ENCODE measurements at regions of chr15 and their contacts with region 1.

Region 1: GRCh38 chr15:99704444-99704838 is 28.8 kb downstream of the LYSMD4 start:
- DNase-seq: peak; percentile 83
- H3K4me3 ChIP-seq: no peak overlapping the region
- H3K27ac ChIP-seq: no peak overlapping the region
- H3K4me1 ChIP-seq: peaks cover 39% of the 10 kb centered on the region
- H3K27me3 ChIP-seq: no peaks in the 10 kb centered on the region
- CTCF ChIP-seq: peak; percentile 78 to 85

Region 2: GRCh38 chr15:99250494-99251435 is 453.7 kb before region 1 on chr15:
- CTCF ChIA-PET with region 1: no interaction called
- dilution Hi-C with region 1: loop called (anchors 25 kb)
- in situ Hi-C with region 1: no loop called
- intact Hi-C with region 1: no loop called
- DNase-seq: peak; percentile 98
- H3K4me3 ChIP-seq: peak overlapping the region; percentile 61 to 83 (median 82)
- H3K27ac ChIP-seq: peak overlapping the region; percentile 88
- H3K4me1 ChIP-seq: peaks cover 18% of the 10 kb centered on the region
- H3K27me3 ChIP-seq: no peaks in the 10 kb centered on the region
- CTCF ChIP-seq: no peak

Region 3: GRCh38 chr15:99282121-99282520 is 422.3 kb before region 1 on chr15:
- CTCF ChIA-PET with region 1: interaction called, 4 read pairs
- dilution Hi-C with region 1: no loop called
- in situ Hi-C with region 1: loop called in 1 of 2 experiments (anchors 10 kb)
- intact Hi-C with region 1: loop called (anchors 1 kb)
- DNase-seq: no peak
- H3K4me3 ChIP-seq: no peak overlapping the region
- H3K27ac ChIP-seq: no peak overlapping the region
- H3K4me1 ChIP-seq: peaks cover 8% of the 10 kb centered on the region
- H3K27me3 ChIP-seq: no peaks in the 10 kb centered on the region
- CTCF ChIP-seq: no peak

Region 4: GRCh38 chr15:99409097-99409473 is 295.4 kb before region 1 on chr15:
- CTCF ChIA-PET with region 1: interaction called, 24 read pairs
- dilution Hi-C with region 1: no loop called
- in situ Hi-C with region 1: loop called in 1 of 2 experiments (anchors 25 kb)
- intact Hi-C with region 1: loop called (anchors 1 kb)
- DNase-seq: peak; percentile 58
- H3K4me3 ChIP-seq: no peak overlapping the region
- H3K27ac ChIP-seq: no peak overlapping the region
- H3K4me1 ChIP-seq: peaks cover 14% of the 10 kb centered on the region
- H3K27me3 ChIP-seq: no peaks in the 10 kb centered on the region
- CTCF ChIP-seq: peak; percentile 57 to 92

Region 5: DNA sequence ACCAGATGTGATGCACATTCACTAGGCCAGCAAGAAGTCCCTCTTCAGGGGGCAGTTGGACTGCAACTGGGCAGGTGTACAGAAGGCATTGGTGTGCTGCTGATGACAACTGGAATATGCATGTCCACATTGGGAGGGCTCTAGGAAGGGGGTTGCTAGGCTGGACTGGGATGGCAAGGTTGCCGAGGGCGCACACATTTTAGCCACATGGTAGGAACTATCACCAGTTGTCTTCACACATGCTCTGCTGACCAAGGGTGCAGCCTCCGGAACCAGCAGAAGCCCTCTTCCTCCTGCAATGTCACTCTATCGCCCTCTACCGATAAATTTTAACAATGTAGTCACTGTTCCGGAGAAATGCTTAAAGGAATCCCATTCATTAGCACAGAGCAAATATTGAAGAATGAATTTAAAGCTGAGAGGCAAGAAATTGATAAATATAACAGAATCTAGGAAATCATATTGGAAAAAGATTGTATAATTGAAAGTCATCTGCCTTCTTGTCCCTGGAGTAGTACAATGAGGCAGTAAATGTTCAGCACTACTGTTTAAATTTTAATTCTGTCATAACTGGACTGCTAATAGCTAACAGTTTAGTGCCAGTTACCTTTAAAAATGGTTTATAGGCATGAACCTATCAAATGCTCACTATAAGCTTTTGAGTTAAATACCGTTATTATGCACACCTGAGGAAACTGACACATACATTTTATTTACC is 51.4 kb after region 1 on chr15:
- CTCF ChIA-PET with region 1: interaction called, 3 read pairs
- dilution Hi-C with region 1: no loop called
- in situ Hi-C with region 1: no loop called
- intact Hi-C with region 1: loop called (anchors 1 kb)
- DNase-seq: peak; percentile 52
- H3K4me3 ChIP-seq: no peak overlapping the region
- H3K27ac ChIP-seq: no peak overlapping the region
- H3K4me1 ChIP-seq: no peaks in the 10 kb centered on the region
- H3K27me3 ChIP-seq: no peaks in the 10 kb centered on the region
- CTCF ChIP-seq: peak; percentile 74 to 87

Measured in mammary epithelial cell (primary cell).